K562 (cell line): ENCODE measurements at regions of chr17 and their contacts with region 1.

Region 1: GRCh38 chr17:43151880-43152456 is 19.0 kb upstream of the NBR1 start:
- DNase-seq: no peak
- ATAC-seq: no peak
- H3K4me3 ChIP-seq: no peak overlapping the region
- H3K27ac ChIP-seq: no peak overlapping the region
- H3K4me1 ChIP-seq: peaks cover 0 to 9% of the 10 kb centered on the region in 2 experiments; a peak in 3 of 5 replicates
- H3K27me3 ChIP-seq: no peaks in the 10 kb centered on the region
- CTCF ChIP-seq: no peak
- EP300 ChIP-seq: no peak
- POLR2A ChIP-seq: no peak
- RAD21 ChIP-seq: no peak

Region 2: GRCh38 chr17:43085474-43085873 is 66.5 kb before region 1 on chr17:
- CTCF ChIA-PET with region 1: no interaction called
- POLR2A ChIA-PET with region 1: no interaction called
- in situ Hi-C with region 1: no loop called
- intact Hi-C with region 1: no loop called
- DNase-seq: peak in 1 of 4 experiments; percentile 3
- ATAC-seq: no peak
- H3K4me3 ChIP-seq: no peak overlapping the region
- H3K27ac ChIP-seq: no peak overlapping the region
- H3K4me1 ChIP-seq: no peaks in the 10 kb centered on the region
- H3K27me3 ChIP-seq: no peaks in the 10 kb centered on the region
- CTCF ChIP-seq: 0 out of 6 replicates have a peak, but pooled peaks of 1 of the 3 experiments have one; percentile 1
- EP300 ChIP-seq: no peak
- POLR2A ChIP-seq: no peak
- RAD21 ChIP-seq: no peak

Region 3: DNA sequence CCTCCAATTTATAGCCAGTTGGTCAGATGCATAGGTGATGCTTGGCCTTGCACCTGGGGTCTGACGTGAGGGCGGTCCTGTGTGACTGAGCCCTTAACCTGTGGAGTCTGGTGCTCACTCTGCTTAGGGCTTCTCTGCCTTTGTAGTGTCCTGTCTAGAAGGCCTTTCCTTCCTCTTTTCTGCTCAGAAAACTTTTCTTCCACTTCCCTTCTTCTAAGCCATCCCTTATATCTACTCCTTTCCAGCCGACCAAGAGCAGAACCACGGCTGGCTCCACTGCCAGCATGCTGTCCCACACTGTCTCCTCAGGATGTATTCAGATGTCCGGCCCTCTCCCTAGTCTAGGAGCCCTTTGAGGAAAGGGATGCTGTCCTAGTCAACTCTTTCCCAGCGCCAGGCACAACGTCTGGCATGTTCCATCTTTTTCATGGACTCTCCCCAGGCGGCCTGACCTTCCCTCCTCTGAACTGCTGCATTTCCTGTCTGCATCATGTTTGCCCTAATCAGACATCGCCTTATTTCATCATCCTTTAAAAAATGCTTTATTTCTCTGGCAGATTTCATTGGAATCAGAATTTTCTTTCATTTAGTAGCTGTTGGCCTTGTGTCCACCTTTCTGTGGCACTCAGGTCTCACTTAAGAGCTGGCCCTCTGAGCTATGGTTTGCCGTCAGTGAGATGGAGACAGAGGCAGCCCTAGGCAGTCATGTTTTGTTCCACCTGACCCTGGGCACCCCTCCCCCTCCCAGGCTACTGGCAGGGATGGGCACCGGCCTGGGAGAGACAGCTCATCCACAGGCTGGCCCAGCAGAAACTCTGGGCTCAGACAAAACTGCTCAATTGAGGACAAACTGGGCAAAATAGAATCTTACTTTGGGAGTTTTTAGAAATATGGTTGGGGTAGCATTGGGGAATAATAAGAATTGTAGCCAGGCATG is 11.3 kb before region 1 on chr17:
- CTCF ChIA-PET with region 1: no interaction called
- POLR2A ChIA-PET with region 1: interaction called, 15 read pairs
- in situ Hi-C with region 1: no loop called
- intact Hi-C with region 1: no loop called
- DNase-seq: no peak
- ATAC-seq: no peak
- H3K4me3 ChIP-seq: no peak overlapping the region
- H3K27ac ChIP-seq: no peak overlapping the region
- H3K4me1 ChIP-seq: no peaks in the 10 kb centered on the region; a peak in 2 of 5 replicates
- H3K27me3 ChIP-seq: no peaks in the 10 kb centered on the region
- CTCF ChIP-seq: no peak
- EP300 ChIP-seq: no peak
- POLR2A ChIP-seq: no peak
- RAD21 ChIP-seq: no peak

Region 4: DNA sequence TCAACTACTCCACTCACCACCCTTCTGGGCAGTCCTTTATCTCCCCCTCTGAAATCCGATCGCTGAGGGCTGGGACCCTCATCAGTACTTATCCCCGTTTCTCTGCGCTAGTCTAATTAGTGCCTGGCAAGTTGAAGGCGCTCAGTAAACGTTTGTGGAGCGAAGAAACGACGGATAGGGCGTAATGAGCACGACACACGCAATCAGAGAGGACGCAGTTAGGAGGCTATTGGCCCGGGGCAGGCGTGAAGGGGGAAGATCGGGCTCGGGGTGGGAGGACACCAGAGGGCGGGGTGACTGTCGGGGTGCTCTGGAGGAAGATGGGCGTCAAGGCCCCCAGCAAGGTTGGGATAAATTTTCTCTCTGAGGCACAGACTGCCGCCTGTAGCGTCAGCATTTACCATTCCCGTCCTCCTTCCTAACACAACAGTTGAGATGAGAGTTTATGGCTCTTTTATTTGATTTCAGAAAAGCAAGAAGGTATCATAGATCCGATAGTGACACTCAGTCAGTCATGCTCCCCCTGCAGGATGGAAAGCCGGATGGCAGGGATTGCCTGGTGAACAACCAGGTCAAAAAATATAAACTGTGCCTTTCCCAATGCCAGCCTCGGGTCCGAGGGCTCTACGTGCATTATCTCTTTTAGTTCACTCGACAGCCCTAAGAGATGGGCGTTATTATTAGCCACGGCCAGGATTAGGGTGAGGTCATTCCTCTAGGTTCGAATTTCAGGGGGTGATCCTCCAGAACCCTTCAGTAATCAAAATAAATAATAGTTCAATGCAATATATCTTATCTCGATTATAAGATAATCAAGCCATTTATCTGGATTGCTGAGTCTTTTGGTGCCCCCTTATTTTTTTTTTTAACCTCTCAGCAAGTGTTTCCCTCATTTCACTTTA is 237.3 kb after region 1 on chr17:
- CTCF ChIA-PET with region 1: no interaction called
- POLR2A ChIA-PET with region 1: no interaction called
- in situ Hi-C with region 1: no loop called
- intact Hi-C with region 1: no loop called
- DNase-seq: peak; percentile 40 to 71 (median 47)
- ATAC-seq: peak; percentile 74
- H3K4me3 ChIP-seq: peak overlapping the region; percentile 42
- H3K27ac ChIP-seq: peak overlapping the region; percentile 86
- H3K4me1 ChIP-seq: peaks cover 5 to 12% of the 10 kb centered on the region in 2 experiments; a peak in 2 of 5 replicates
- H3K27me3 ChIP-seq: no peaks in the 10 kb centered on the region
- CTCF ChIP-seq: peak; percentile 51 to 73 (median 68)
- EP300 ChIP-seq: no peak
- POLR2A ChIP-seq: no peak
- RAD21 ChIP-seq: peak in 1 of 2 experiments; percentile 30; a peak in 2 of 4 replicates